Activated B cell treated with CpG ODN at 0.5 μM for 24 hours (primary cell): ENCODE measurements at regions of chr7 and their contacts with region 1.

Region 1: GRCh38 chr7:140062528-140063299 is at the start of gene PARP12:
- DNase-seq: peak; percentile 93
- ATAC-seq: peak; percentile 81
- H3K4me3 Mint-ChIP-seq: peak within 1 kb of the TSS; percentile 97
- H3K27ac Mint-ChIP-seq: peak within 1 kb of the TSS; percentile 98
- H3K4me1 Mint-ChIP-seq: peaks cover 47% of the 10 kb centered on the region
- H3K27me3 Mint-ChIP-seq: no peaks in the 10 kb centered on the region
- CTCF ChIP-seq: no peak
- total RNA-seq, gene PARP12: 104 and 128 TPM in 2 replicates

Region 2: GRCh38 chr7:139118234-139118804 is 944.4 kb before region 1 on chr7:
- CTCF ChIA-PET with region 1: no interaction called
- POLR2A ChIA-PET with region 1: no interaction called
- intact Hi-C with region 1: loop called (anchors 10 kb)
- DNase-seq: no peak
- ATAC-seq: peak; percentile 23
- H3K4me3 Mint-ChIP-seq: peak overlapping the region; percentile 68
- H3K27ac Mint-ChIP-seq: peak overlapping the region; percentile 91
- H3K4me1 Mint-ChIP-seq: peaks cover 31% of the 10 kb centered on the region
- H3K27me3 Mint-ChIP-seq: no peaks in the 10 kb centered on the region
- CTCF ChIP-seq: no peak

Region 3: DNA sequence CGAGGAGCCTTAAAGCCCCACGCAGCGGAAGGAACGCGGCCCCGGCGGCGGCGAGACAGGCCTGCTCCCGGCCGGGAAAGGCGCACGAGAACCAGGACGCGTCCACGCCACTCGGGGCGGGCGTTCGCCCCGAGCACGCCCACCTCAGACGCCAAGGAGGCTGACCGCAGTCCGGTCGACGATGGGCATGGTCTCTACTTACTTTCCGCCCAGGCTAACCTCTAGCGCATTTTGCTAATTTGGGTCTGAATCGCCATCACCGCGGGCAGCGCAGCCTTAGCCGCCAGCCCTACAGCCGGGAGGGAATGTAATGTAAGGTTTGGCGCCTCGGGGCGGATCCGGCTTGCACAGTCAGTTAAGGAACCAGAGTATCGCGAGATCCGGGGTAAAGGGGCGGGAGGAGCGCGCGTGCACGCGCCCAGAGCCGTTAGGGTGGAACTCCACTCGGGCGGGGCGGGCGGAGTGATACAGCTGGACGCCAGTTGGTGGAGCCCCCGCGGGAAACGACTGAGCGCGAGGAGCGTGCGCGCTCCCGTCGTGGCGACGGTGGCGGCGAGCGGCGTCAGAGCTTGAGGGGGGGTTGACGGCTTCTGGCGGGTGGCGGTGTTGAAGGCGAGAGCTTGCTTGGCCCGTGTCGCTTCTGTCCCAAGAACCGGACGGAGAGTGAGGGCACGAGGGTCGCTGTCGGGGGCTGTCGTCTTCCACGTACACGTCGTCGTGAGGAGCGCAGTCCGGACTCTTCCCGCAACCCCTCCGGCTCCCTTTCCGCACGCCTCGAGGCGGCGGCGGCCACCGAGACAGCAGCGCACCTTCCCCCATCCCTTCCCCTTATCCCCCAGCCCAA is 703.1 kb before region 1 on chr7 and contains the start of gene LUC7L2:
- CTCF ChIA-PET with region 1: no interaction called
- POLR2A ChIA-PET with region 1: interaction called, 4 read pairs
- intact Hi-C with region 1: loop called (anchors 1 kb)
- DNase-seq: peak; percentile 97
- ATAC-seq: peak; percentile 78
- H3K4me3 Mint-ChIP-seq: peak within 1 kb of the TSS; percentile 98
- H3K27ac Mint-ChIP-seq: peak within 1 kb of the TSS; percentile 100
- H3K4me1 Mint-ChIP-seq: peaks cover 41% of the 10 kb centered on the region
- H3K27me3 Mint-ChIP-seq: no peaks in the 10 kb centered on the region
- CTCF ChIP-seq: no peak
- total RNA-seq, gene LUC7L2: 94.0 and 118 TPM in 2 replicates

Region 4: DNA sequence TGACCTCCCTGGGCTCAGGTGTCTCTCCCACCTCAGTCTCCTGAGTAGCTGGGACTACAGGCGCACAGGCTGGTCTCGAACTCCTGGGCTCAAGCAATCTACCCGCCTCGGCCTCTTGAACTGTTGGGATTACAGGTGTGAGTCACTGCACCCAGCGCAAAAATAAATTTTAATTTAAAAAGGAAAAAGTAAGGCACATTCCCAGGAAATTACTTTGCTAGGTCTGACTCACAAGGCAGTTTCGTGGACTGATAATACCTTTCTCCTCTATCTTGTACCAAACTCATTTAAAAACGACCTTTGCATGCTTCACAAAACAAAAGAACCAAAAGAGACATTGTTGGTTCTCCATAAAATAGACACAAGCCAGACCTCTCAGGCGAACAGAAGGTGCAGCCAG is 29.7 kb before region 1 on chr7:
- CTCF ChIA-PET with region 1: no interaction called
- POLR2A ChIA-PET with region 1: no interaction called
- intact Hi-C with region 1: no loop called
- DNase-seq: no peak
- ATAC-seq: no peak
- H3K4me3 Mint-ChIP-seq: no peak overlapping the region
- H3K27ac Mint-ChIP-seq: no peak overlapping the region
- H3K4me1 Mint-ChIP-seq: peaks cover 24% of the 10 kb centered on the region
- H3K27me3 Mint-ChIP-seq: no peaks in the 10 kb centered on the region
- CTCF ChIP-seq: no peak

Region 5: GRCh38 chr7:140084972-140085371 is 22.3 kb after region 1 on chr7:
- CTCF ChIA-PET with region 1: no interaction called
- POLR2A ChIA-PET with region 1: interaction called, 10 read pairs
- intact Hi-C with region 1: loop called (anchors 1 kb)
- DNase-seq: no peak
- ATAC-seq: peak; percentile 96
- H3K4me3 Mint-ChIP-seq: peak overlapping the region; percentile 1
- H3K27ac Mint-ChIP-seq: peak overlapping the region; percentile 13
- H3K4me1 Mint-ChIP-seq: peaks cover 24% of the 10 kb centered on the region
- H3K27me3 Mint-ChIP-seq: no peaks in the 10 kb centered on the region
- CTCF ChIP-seq: no peak

Region 6: DNA sequence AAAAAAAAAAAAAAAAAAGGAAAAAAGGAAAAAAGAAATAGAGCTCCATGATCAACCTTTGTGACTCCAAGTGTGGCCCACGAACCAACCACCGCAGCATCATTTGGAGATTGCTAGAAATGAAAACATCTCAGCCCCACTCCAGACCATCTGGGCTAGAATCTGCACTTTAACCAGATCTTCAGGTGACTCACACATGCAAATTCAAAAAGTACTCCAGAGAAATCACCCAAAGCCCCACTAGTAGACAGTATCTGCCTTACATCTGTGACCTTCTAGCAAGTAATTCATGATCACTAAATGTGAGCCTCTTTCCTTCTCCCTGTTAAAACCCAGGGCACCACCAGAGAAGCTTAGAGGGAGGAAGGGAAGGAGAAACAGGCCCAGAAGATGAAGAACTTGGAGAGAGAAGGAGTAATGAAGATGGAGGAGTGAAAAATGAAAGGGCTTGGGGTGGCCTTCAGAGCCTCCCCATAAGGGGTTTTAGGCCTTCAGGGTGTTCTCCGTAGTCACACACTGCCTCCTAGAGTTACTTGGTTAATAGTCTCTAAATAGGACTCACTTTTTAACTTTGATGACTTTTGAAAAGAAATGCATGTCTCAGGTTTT is 241.6 kb after region 1 on chr7:
- CTCF ChIA-PET with region 1: no interaction called
- POLR2A ChIA-PET with region 1: no interaction called
- intact Hi-C with region 1: loop called (anchors 1 kb)
- DNase-seq: no peak
- ATAC-seq: peak; percentile 96
- H3K4me3 Mint-ChIP-seq: peak overlapping the region; percentile 39
- H3K27ac Mint-ChIP-seq: peak overlapping the region; percentile 90
- H3K4me1 Mint-ChIP-seq: peaks cover 5% of the 10 kb centered on the region
- H3K27me3 Mint-ChIP-seq: no peaks in the 10 kb centered on the region
- CTCF ChIP-seq: no peak

Region 7: GRCh38 chr7:140390466-140391190 is 327.9 kb after region 1 on chr7:
- CTCF ChIA-PET with region 1: no interaction called
- POLR2A ChIA-PET with region 1: no interaction called
- intact Hi-C with region 1: loop called (anchors 5 kb)
- DNase-seq: peak; percentile 32
- ATAC-seq: peak; percentile 88
- H3K4me3 Mint-ChIP-seq: no peak overlapping the region
- H3K27ac Mint-ChIP-seq: no peak overlapping the region
- H3K4me1 Mint-ChIP-seq: no peaks in the 10 kb centered on the region
- H3K27me3 Mint-ChIP-seq: no peaks in the 10 kb centered on the region
- CTCF ChIP-seq: no peak